ENCODE measurements at regions of chr7 and their contacts with region 1.

Region 1: GRCh38 chr7:114085592-114086501 is 167.0 kb upstream of the PPP1R3A start:
- DNase-seq: peak; percentile 88 to 91 (median 89)
- H3K4me3 ChIP-seq: peak overlapping the region; percentile 80
- H3K27ac ChIP-seq: peak overlapping the region; percentile 77 to 97
- H3K4me1 ChIP-seq: no peaks in the 10 kb centered on the region
- H3K27me3 ChIP-seq: no peaks in the 10 kb centered on the region
- CTCF ChIP-seq: no peak
- EP300 ChIP-seq: no peak
- POLR2A ChIP-seq: peak; percentile 60

Region 2: GRCh38 chr7:114356133-114356532 is 270.3 kb after region 1 on chr7:
- intact Hi-C with region 1: no loop called
- DNase-seq: no peak
- H3K4me3 ChIP-seq: no peak overlapping the region
- H3K27ac ChIP-seq: no peak overlapping the region
- H3K4me1 ChIP-seq: no peaks in the 10 kb centered on the region
- H3K27me3 ChIP-seq: no peaks in the 10 kb centered on the region
- CTCF ChIP-seq: no peak
- EP300 ChIP-seq: no peak
- POLR2A ChIP-seq: no peak

Region 3: DNA sequence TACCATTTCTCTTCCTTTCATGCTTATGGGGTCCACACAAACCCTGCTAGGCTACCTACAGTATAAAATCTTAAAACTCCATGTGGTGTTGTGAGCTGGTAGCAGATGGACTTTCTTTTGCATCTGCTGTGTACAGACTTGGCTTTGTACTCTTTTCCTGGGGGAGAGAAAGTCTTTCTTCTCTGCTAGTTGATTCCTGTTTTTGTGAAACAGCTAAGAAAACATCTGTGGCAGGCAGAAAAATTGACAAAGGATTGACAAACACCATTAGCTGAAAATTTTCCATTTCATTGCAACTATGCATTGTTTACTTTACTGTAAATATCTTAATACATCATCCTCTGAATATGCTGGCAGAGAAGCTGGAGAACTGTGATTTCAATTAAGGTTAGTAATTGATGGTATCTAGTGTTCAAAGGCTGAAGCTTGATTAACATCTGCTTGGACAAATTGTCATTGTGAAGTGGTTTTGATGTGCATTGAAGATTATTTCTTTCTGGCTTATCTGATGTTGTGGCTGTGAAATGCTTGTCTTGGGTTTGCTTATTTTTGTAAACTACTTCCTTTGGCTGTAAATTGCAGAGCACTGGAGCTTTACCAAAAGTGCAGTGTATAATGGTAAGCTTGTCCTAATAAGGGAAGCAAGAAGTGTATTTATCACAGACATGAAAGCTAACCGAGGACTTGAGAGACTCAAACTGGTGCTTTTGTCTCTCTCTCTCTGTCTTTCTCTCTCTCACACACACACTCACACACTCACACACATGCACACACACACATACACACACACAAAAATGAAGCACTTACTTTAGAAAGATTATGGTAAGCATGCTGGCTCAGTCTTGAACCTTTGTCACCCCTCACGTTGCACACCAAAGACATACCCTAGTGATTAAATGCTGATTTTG is 328.6 kb after region 1 on chr7 and contains the start of gene FOXP2:
- intact Hi-C with region 1: loop called in 1 of 4 experiments (anchors 10 kb)
- DNase-seq: no peak
- H3K4me3 ChIP-seq: peak within 1 kb of the TSS; percentile 35
- H3K27ac ChIP-seq: peak within 1 kb of the TSS in 1 of 2 donors; percentile 46
- H3K4me1 ChIP-seq: peaks cover 4% of the 10 kb centered on the region
- H3K27me3 ChIP-seq: no peaks in the 10 kb centered on the region
- CTCF ChIP-seq: no peak
- EP300 ChIP-seq: no peak
- POLR2A ChIP-seq: no peak
- total RNA-seq, gene FOXP2: 8.0 to 26.5 (median 15.4) TPM

Region 4: DNA sequence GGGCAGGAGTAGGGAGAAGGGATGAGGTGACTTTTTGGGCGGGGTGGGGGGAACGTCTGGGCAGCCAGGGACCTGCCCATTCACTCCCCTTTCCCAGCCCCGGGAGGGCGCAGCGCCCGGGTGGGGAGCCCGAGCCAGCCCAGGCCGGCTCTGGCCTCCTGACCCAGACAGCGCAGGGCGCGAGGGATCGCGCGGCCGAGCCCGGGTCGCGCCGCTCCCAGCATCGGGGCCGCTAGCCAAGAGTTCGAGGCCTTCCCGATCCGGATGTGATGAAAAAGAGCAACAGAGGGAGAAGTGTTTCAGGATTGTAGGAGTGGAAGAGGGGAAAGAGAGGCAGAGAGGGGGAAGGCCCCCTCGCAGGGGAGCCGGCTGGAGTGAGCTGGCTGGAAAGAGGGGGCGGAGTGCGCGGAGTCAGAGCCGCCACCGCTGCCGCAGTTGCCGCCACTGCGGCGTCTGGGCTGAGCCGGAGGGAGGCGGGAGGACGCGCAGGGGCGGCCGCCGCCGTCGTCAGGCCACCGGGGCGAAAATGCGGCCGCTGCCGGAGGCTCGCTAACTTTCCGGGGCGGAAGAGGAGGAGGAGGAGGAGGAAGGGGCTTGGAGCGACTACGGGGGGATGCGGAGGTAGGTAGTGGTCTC is 836.3 kb after region 1 on chr7 and contains the start of gene MDFIC:
- intact Hi-C with region 1: loop called in 1 of 4 experiments (anchors 10 kb)
- DNase-seq: peak; percentile 58 to 81 (median 78)
- H3K4me3 ChIP-seq: peak within 1 kb of the TSS; percentile 89
- H3K27ac ChIP-seq: peak within 1 kb of the TSS; percentile 84 to 88
- H3K4me1 ChIP-seq: peaks cover 5% of the 10 kb centered on the region
- H3K27me3 ChIP-seq: no peaks in the 10 kb centered on the region
- CTCF ChIP-seq: no peak
- EP300 ChIP-seq: no peak
- POLR2A ChIP-seq: peak; percentile 39
- total RNA-seq, gene MDFIC: 13.1 to 25.6 (median 17.9) TPM